Dendritic cell treated with granulocyte-macrophage colony-stimulating factor and Interleukin-4, amounts not matched to agents 40 ng/mL and 50 ng/mL, for 4 days (primary cell): ENCODE measurements at regions of chr9 and their contacts with region 1.

Region 1: GRCh38 chr9:68560071-68560844 is 19.6 kb upstream of the TMEM252 start:
- H3K4me3 Mint-ChIP-seq: peak overlapping the region; percentile 35
- H3K27ac Mint-ChIP-seq: peak overlapping the region; percentile 73
- H3K4me1 Mint-ChIP-seq: peaks cover 81% of the 10 kb centered on the region
- H3K27me3 Mint-ChIP-seq: no peaks in the 10 kb centered on the region

Region 2: DNA sequence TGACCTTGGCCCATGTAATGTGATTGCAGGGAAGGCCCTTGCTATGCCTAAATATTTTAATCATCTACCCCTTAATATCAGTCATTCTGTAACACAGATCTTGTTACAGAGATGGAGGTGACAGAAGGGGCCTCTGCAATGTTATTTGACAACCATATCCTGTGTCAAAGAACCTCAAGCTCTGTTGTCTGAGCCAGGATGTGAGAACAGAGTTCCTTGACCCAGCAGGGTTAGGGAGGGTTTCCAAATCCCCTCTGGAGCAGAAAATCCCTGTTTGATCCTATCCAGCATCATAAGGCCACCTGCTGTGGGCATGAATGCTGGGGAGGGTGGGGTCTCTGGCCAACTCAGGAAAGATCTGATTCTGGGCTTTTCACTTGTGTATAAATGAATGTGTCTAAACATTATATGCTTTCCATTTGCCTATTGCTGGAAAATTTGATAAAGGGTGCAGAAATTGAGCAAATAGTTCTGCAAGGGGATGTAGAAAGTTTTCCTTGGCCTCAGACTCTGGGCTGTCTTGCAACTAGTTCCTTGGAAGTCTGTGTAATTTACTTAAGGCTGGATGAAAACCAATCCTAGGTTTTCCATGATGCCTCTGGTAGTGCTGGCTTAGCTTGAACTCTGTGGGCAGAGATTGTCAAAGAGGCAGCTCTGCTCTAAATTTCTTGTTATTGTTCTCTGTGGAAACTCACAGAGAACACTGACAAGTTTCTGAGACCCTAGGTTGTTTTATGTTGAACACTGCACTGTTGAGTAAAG is 132.9 kb before region 1 on chr9:
- intact Hi-C with region 1: loop called (anchors 10 kb)
- H3K4me3 Mint-ChIP-seq: no peak overlapping the region
- H3K27ac Mint-ChIP-seq: no peak overlapping the region
- H3K4me1 Mint-ChIP-seq: no peaks in the 10 kb centered on the region
- H3K27me3 Mint-ChIP-seq: peaks cover 4% of the 10 kb centered on the region

Region 3: GRCh38 chr9:68507130-68507805 is 53.0 kb before region 1 on chr9:
- intact Hi-C with region 1: no loop called
- H3K4me3 Mint-ChIP-seq: no peak overlapping the region
- H3K27ac Mint-ChIP-seq: no peak overlapping the region
- H3K4me1 Mint-ChIP-seq: peaks cover 6% of the 10 kb centered on the region
- H3K27me3 Mint-ChIP-seq: no peaks in the 10 kb centered on the region

Region 4: GRCh38 chr9:68522131-68522530 is 38.1 kb before region 1 on chr9:
- intact Hi-C with region 1: loop called (anchors 2 kb)
- H3K4me3 Mint-ChIP-seq: no peak overlapping the region
- H3K27ac Mint-ChIP-seq: no peak overlapping the region
- H3K4me1 Mint-ChIP-seq: peaks cover 20% of the 10 kb centered on the region
- H3K27me3 Mint-ChIP-seq: no peaks in the 10 kb centered on the region